Esophagus muscularis mucosa (tissue), 4 donors: ENCODE measurements at regions of chr2 and their contacts with region 1.

Region 1: DNA sequence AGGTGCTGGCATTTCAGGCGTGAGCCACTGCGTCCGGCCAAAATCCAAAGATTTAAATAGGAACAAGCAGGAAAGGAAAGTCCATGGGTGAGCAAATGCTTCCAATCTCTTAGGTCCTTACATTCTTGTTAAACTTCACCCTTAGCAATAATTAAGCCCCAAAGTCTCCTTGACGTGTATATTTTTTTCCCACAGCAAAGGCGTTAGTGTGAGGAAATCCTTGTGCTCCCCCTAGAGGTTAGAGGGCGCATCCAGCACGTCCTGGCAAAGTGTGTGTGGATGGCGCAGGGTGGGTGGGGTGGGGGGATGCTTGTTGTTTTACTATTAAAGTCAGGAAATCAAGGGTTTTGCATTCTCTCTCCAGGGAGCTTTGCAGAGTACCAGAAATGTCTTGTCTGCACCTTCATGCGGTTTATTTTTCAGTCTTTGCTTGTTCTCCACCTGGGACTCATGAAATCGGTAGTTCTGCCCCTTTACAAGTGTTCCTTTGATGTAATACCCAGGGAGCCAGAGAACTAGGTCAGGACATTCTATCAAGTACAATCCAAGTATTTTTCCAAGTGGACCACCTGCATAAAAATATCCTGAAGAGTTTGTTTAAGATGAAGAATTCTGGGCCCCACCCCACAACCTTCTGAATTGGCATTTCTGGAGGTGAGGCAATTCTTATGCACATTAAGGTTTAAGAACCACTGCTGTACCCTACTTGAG is 22.2 kb upstream of the ITSN2 start:
- DNase-seq: no peak
- H3K4me3 ChIP-seq: no peak overlapping the region
- H3K27ac ChIP-seq: no peak overlapping the region
- H3K4me1 ChIP-seq: peaks cover 0 to 7% (median 3%) of the 10 kb centered on the region in 4 donors
- H3K27me3 ChIP-seq: no peaks in the 10 kb centered on the region
- CTCF ChIP-seq: peak; percentile 54 to 85 (median 83)
- EP300 ChIP-seq: no peak
- POLR2A ChIP-seq: no peak

Region 2: GRCh38 chr2:24231461-24231881 is 151.0 kb before region 1 on chr2:
- intact Hi-C with region 1: loop called (anchors 5 kb)
- DNase-seq: no peak
- H3K4me3 ChIP-seq: no peak overlapping the region
- H3K27ac ChIP-seq: no peak overlapping the region
- H3K4me1 ChIP-seq: no peaks in the 10 kb centered on the region
- H3K27me3 ChIP-seq: no peaks in the 10 kb centered on the region
- CTCF ChIP-seq: no peak
- EP300 ChIP-seq: no peak
- POLR2A ChIP-seq: no peak

Region 3: GRCh38 chr2:24721470-24721869 is 339.0 kb after region 1 on chr2:
- intact Hi-C with region 1: no loop called
- DNase-seq: no peak
- H3K4me3 ChIP-seq: no peak overlapping the region
- H3K27ac ChIP-seq: peak overlapping the region; percentile 21 to 58 (median 49)
- H3K4me1 ChIP-seq: peaks cover 12 to 23% (median 22%) of the 10 kb centered on the region in 4 donors
- H3K27me3 ChIP-seq: no peaks in the 10 kb centered on the region
- CTCF ChIP-seq: no peak
- EP300 ChIP-seq: no peak
- POLR2A ChIP-seq: no peak

Region 4: GRCh38 chr2:24754985-24755705 is 372.6 kb after region 1 on chr2:
- intact Hi-C with region 1: no loop called
- DNase-seq: no peak
- H3K4me3 ChIP-seq: no peak overlapping the region
- H3K27ac ChIP-seq: no peak overlapping the region
- H3K4me1 ChIP-seq: no peaks in the 10 kb centered on the region
- H3K27me3 ChIP-seq: no peaks in the 10 kb centered on the region
- CTCF ChIP-seq: no peak
- EP300 ChIP-seq: no peak
- POLR2A ChIP-seq: no peak